ENCODE measurements at regions of chr10 and their contacts with region 1.

Region 1: DNA sequence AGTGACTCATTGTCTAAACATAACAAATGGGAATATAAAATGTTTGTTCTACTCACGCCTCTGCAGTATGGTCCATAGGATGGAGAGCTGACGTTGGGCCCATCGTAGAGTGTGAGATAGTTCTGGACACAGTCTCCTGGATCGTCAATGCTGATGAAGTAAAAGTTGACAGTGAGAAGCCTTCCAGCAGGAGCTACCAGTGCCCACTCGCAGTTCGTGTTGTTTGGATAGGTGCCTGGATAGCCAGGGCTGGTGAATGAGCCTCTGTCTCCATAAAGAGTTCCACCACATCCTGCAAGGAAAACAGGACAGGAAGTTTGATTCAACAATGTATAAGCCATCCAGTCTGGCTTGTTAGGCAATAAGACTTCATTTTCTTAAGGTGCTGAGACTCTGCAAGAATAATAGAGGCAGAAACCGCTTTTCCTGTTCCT is 79.6 kb downstream of the OR13A1 start:
- DNase-seq: no peak
- H3K4me3 Mint-ChIP-seq: no peak overlapping the region
- H3K27ac Mint-ChIP-seq: no peak overlapping the region
- H3K4me1 Mint-ChIP-seq: peaks cover 14% of the 10 kb centered on the region
- H3K27me3 Mint-ChIP-seq: peaks cover 2% of the 10 kb centered on the region

Region 2: DNA sequence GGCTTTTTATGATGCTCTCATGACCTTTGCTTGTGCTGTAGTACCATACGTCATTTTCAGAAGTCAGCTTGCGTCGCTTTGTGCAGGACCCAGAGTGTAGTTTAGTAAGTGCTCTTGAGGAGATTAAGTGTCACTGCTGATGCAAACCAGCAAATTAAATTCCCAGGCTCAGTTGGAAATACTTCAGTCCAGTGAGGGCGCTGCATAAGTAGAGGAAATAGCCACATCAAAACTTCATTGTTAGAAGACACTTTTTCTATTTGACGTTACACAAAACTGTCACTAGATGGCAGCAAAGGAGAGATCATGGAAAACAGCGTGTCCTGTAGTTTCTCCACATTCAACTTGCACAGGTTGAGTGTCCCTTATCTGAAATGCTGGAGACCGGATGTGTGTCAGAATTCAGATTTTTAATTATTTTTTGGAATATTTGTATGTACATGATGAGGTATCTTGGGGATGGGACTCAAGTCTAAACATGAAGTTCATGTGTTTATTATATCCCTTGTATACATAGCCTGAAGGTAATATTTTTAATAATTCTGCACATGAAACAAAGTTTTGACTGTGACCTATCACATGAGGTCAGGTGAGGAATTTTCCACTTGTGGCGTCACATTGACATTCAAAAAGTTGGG is 227.2 kb before region 1 on chr10:
- intact Hi-C with region 1: loop called (anchors 2 kb)
- DNase-seq: no peak
- H3K4me3 Mint-ChIP-seq: no peak overlapping the region
- H3K27ac Mint-ChIP-seq: no peak overlapping the region
- H3K4me1 Mint-ChIP-seq: no peaks in the 10 kb centered on the region
- H3K27me3 Mint-ChIP-seq: no peaks in the 10 kb centered on the region

Region 3: GRCh38 chr10:45155784-45156183 is 80.0 kb before region 1 on chr10:
- intact Hi-C with region 1: no loop called
- DNase-seq: no peak
- H3K4me3 Mint-ChIP-seq: no peak overlapping the region
- H3K27ac Mint-ChIP-seq: no peak overlapping the region
- H3K4me1 Mint-ChIP-seq: no peaks in the 10 kb centered on the region
- H3K27me3 Mint-ChIP-seq: no peaks in the 10 kb centered on the region

Region 4: DNA sequence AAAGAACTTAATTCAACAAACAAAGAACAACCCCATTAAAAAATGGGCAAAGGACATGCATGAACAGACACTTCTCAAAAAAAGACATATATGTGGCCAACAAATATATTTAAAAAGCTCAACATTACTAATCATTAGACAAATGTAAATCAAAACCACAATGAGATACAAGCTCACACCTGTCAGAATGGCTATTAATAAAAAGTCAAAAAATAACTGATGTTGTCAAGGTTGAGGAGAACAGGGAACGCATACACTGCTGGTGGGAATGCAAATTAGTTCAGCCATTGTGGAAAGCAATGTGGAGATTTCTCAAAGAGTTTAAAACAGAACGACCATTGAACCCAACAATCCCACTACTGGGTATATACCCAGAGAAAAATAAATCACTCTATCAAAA is 417.6 kb after region 1 on chr10:
- intact Hi-C with region 1: no loop called
- DNase-seq: no peak
- H3K4me3 Mint-ChIP-seq: no peak overlapping the region
- H3K27ac Mint-ChIP-seq: no peak overlapping the region
- H3K4me1 Mint-ChIP-seq: peaks cover 28% of the 10 kb centered on the region
- H3K27me3 Mint-ChIP-seq: no peaks in the 10 kb centered on the region

Region 5: GRCh38 chr10:46030091-46030937 is 794.5 kb after region 1 on chr10 and contains the start of gene NCOA4:
- intact Hi-C with region 1: loop called (anchors 5 kb)
- DNase-seq: peak; percentile 93
- H3K4me3 Mint-ChIP-seq: peak within 1 kb of the TSS; percentile 95
- H3K27ac Mint-ChIP-seq: peak within 1 kb of the TSS; percentile 91
- H3K4me1 Mint-ChIP-seq: peaks cover 45% of the 10 kb centered on the region
- H3K27me3 Mint-ChIP-seq: no peaks in the 10 kb centered on the region
- total RNA-seq, gene NCOA4: 101 and 102 TPM in 2 replicates

Region 6: GRCh38 chr10:46255801-46256747 is 1020.3 kb after region 1 on chr10:
- intact Hi-C with region 1: loop called (anchors 10 kb)
- DNase-seq: peak; percentile 21
- H3K4me3 Mint-ChIP-seq: no peak overlapping the region
- H3K27ac Mint-ChIP-seq: no peak overlapping the region
- H3K4me1 Mint-ChIP-seq: peaks cover 5% of the 10 kb centered on the region
- H3K27me3 Mint-ChIP-seq: no peaks in the 10 kb centered on the region